Mucosa of descending colon (tissue), 3 donors: ENCODE measurements at regions of chr5 and their contacts with region 1.

Region 1: GRCh38 chr5:79464695-79465332 is 49.1 kb downstream of the HOMER1 start:
- DNase-seq: no peak
- ATAC-seq: peak; percentile 36
- H3K4me3 ChIP-seq: no peak overlapping the region
- H3K4me1 ChIP-seq: no peaks in the 10 kb centered on the region
- CTCF ChIP-seq: peak; percentile 38

Region 2: DNA sequence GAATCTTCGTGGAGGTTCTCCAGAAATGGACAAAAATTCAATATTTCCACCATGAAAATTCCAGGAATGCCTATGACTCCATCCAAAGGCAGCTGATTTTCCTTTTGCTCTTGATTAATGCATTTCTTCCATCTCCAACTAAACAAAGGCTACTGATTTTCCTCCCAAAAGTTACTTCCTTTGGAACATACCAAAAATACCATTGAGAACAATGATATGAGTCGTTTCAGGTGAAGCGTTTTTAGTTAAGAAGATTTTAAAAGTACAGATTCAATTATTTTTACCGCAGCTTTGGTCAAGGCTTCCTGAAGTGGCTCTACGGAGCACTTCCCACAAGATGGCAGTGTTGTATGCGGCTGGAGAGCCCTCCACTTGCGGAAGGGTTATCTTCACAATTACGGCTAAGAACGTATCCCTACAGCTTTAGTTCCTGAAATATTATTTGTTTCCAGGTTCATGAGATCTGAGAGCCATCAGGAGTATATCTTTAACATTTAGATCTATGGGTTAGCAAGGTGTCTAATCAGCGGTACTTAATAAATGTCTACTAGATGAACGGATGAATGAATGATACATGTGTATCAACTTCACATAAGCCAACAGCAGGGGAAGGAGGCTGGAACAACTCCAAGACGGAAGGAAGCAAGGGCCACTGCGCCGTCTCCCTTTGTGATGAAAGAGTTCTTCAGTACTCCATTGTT is 443.8 kb before region 1 on chr5:
- intact Hi-C with region 1: loop called in 1 of 2 experiments (anchors 10 kb)
- DNase-seq: peak in 2 of 3 donors; percentile 50 to 73
- ATAC-seq: peak; percentile 91
- H3K4me3 ChIP-seq: no peak overlapping the region
- H3K4me1 ChIP-seq: peaks cover 4% of the 10 kb centered on the region
- CTCF ChIP-seq: peak; percentile 66

Region 3: DNA sequence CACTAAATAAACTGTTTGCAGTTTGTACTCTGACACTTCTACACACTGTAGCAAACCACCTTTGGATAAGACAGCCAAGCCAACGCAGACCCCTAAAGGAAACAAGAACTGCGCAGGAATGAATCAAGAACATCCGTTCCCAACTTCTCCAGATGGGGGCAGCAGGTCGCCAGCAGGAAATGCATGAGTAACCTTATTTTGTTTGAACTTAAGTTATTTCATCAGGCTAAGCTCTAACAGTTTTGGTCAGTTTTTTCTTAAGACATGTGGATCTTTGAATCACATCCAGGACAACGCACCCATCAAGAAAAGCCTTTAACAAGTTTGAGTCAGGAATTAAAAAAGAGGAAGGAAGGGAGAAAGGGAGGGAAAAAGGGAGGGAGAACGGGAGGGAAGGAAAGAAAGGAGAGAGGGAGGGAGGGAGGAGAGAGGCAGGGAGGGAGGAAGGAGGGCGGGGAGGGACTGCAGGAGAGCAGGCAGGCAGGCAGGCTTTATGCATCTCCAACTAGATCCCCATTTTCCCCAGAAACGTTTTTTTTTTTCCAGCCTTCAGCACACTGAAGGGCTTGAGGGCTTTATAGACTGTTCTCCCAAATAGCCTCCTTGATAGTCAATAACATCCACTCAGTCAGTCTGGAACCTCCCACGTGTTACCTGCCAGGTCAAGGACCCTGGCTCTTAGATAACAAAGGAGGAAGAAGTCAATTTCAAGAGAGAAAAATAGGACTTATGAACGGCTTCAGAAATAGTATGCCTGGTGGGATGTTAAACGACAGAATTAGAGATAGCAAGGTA is 331.0 kb before region 1 on chr5:
- intact Hi-C with region 1: loop called (anchors 1 to 10 kb)
- DNase-seq: peak in 2 of 3 donors; percentile 65 to 84
- ATAC-seq: peak; percentile 86
- H3K4me3 ChIP-seq: no peak overlapping the region
- H3K4me1 ChIP-seq: peaks cover 12% of the 10 kb centered on the region
- CTCF ChIP-seq: peak; percentile 29

Region 4: DNA sequence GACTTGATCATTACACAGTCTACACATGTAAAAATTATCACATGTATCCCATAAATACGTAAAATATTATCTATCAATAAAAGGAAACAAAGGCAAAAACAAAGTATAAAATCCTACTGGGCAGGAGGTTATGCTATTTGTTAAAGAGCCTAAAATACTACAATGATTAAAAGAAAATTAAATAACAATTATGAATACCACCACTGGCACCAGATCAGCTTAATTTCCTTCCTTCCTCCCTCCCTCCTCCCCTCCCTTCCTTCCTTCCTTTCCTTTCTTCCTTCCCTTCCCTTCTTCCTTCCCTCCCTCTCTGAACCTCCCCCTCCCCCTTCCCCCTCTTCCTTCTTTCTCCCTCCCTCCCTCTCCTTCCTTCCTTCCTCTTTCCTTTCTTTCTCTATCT is 78.1 kb before region 1 on chr5:
- intact Hi-C with region 1: no loop called
- DNase-seq: no peak
- ATAC-seq: no peak
- H3K4me3 ChIP-seq: no peak overlapping the region
- H3K4me1 ChIP-seq: no peaks in the 10 kb centered on the region
- CTCF ChIP-seq: no peak